ENCODE measurements at regions of chrX and their contacts with region 1.

Region 1: GRCh38 chrX:110412971-110413721 is 54.5 kb downstream of the RTL9 start:
- DNase-seq: peak; percentile 62 to 70 (median 64)
- ATAC-seq: peak; percentile 89
- H3K4me3 ChIP-seq: no peak overlapping the region
- H3K4me1 ChIP-seq: no peaks in the 10 kb centered on the region
- CTCF ChIP-seq: peak; percentile 43

Region 2: DNA sequence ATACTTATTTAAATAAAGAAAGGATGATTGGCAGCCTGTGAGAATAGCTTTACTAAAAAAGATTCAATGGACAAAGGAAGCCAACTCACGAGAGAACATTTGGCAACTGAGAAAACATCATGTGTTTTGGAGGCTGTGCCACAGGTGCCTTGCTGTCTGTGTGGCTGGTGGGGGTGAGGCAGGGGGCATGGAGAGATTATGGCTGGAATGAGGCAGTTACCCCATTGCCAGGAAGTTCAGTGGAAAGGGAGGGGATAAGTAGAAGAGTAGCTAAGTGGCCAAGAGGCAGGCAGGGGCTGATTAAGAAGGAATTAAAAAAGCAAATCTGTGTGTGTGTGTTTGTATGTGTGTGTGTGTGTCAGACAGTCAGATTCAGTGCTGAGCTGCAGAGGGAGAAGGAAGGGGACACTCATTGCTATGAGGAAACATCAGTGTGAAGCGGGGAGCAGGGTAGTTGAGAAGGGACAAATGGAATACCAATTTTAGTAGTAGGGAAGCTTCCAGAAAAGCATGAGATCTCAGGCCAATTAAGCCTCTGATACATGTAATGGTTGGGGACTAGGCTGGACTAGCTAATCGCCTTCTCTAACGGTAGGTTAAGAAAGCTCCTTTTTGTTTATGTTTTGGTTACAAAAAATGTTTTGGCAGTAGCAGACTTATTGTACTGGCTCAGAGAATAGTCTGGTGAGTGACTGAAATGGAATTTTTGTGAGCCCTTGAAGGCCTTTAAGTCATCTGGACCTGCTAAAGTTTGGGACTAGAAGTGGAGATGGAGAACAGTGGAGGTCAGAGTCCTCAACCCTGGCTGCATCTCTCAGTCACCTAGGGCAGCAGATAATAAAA is 391.7 kb before region 1 on chrX:
- intact Hi-C with region 1: no loop called
- DNase-seq: no peak
- ATAC-seq: peak; percentile 9
- H3K4me3 ChIP-seq: no peak overlapping the region
- H3K4me1 ChIP-seq: no peaks in the 10 kb centered on the region
- CTCF ChIP-seq: no peak

Region 3: DNA sequence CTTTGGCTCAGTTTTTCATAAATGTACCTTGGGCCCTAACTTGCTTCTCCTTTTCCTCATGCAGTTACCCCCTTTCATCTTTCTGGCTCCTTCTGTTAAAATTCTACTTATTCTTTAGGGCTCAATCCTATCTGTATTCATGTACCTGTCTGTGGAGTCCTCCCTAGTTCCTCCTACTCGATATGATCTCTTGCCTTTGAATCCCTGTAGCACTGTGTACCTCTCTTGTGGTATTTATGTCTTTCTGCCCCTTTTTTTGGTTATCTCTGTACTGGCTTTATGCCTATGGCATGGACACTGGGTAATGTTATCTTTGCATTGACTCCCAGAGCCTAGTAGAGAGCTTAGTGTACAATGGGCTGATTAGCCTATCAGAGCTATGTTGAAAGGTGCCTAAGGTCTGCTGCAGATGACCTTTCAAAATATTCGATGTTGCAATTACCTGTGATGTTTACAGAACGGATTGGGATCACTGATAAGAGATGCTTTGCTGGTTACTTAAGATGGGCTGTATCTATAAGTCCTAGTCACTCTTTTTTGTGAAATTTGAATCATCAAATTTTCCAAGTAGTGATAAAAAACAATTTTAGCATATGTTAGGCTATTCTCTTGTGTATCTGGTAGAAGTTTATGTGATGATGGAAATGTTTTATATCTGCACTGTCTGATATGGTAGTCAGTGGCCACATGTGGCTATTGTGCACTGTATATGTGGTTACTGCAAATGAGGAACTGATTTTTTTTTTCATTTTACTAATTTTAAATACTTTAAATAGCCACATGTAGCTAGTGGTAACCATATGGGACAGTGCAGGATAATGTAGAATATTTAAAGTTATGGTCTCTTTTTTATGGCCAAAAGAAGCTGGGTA is 376.7 kb before region 1 on chrX:
- intact Hi-C with region 1: no loop called
- DNase-seq: no peak
- ATAC-seq: peak; percentile 18
- H3K4me3 ChIP-seq: no peak overlapping the region
- H3K4me1 ChIP-seq: no peaks in the 10 kb centered on the region
- CTCF ChIP-seq: no peak

Region 4: DNA sequence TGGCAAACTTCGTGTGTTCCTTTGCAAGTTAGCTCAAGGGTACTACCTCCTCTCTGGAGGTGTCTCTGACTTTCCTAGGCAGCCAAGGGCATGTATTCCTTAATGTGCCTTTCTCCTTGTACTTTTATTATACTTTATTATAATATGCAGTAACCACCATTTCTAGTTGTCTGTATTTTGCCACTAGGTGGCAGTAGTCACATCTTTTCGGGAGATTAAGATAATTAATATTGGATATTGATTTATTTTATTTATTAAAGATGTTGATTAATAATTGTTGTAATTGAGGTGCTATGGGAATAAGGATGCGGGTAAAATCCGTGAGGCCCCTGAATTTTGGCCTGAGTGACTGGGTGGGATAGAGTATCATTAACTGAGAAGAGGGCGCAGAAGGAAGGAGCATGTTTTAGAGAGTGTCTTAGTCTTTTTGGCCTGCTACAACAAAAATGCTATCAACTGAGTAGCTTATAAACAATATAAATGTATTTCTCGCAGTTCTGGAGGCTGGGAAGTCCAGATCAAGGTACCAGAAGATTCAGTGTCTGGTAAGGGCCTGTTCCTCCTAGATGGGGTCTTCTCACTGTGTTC is 256.9 kb before region 1 on chrX:
- intact Hi-C with region 1: loop called (anchors 5 kb)
- DNase-seq: no peak
- ATAC-seq: no peak
- H3K4me3 ChIP-seq: no peak overlapping the region
- H3K4me1 ChIP-seq: no peaks in the 10 kb centered on the region
- CTCF ChIP-seq: peak; percentile 10

Measured in mucosa of descending colon (tissue), 3 donors.